PC-9 (cell line): ENCODE measurements at regions of chr10 and their contacts with region 1.

Region 1: GRCh38 chr10:7457478-7458316 is 46.9 kb upstream of the SFMBT2 start:
- DNase-seq: no peak
- H3K4me3 ChIP-seq: no peak overlapping the region
- H3K27ac ChIP-seq: no peak overlapping the region
- H3K4me1 ChIP-seq: no peaks in the 10 kb centered on the region
- H3K27me3 ChIP-seq: peaks cover 20% of the 10 kb centered on the region
- CTCF ChIP-seq: no peak

Region 2: GRCh38 chr10:7410862-7411670 is 46.6 kb before region 1 on chr10 and contains the start of gene SFMBT2:
- CTCF ChIA-PET with region 1: interaction called, 15 read pairs
- POLR2A ChIA-PET with region 1: no interaction called
- intact Hi-C with region 1: no loop called
- DNase-seq: peak in 1 of 2 experiments; percentile 15
- H3K4me3 ChIP-seq: no peak within 1 kb of the TSS
- H3K27ac ChIP-seq: no peak within 1 kb of the TSS
- H3K4me1 ChIP-seq: no peaks in the 10 kb centered on the region
- H3K27me3 ChIP-seq: no peaks in the 10 kb centered on the region
- CTCF ChIP-seq: no peak
- total RNA-seq, gene SFMBT2: 0.07 TPM in 1 of 2 replicates, not detected in the other

Region 3: DNA sequence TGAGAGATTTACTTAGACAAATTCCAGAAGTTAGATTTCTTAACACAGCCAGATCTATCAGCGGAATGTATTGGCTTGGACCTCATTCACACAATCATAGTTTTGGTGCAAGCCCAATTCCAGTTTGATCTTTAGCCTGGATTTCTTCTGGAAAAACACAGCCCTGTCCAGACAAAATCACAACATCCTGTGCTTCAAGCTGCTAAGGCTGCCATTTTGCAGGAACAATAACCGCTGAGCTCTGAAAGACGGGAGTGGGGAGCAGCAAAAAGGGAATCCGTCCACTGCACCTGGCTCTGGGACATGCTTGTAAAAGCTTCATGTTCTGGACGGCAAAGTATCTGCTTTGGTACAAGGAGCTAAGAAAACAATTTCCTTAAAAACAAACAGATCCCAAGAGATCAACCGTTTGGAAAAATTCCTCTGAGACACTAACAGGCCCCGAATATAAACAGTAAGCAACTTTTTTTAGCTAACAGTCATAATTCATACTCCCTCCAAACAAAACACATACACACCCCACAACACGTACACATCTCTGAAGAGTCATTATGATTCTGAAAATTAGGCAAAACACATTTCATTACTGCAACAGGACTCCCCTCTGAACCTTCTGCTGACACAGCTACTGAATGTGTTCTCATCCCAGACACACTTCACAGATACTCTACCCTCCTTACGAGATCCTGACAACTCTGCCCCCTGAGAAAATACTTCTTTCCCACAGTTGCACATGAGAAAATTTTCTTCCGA is 176.6 kb after region 1 on chr10:
- CTCF ChIA-PET with region 1: interaction called, 19 read pairs
- POLR2A ChIA-PET with region 1: no interaction called
- intact Hi-C with region 1: no loop called
- DNase-seq: no peak
- H3K4me3 ChIP-seq: no peak overlapping the region
- H3K27ac ChIP-seq: no peak overlapping the region
- H3K4me1 ChIP-seq: no peaks in the 10 kb centered on the region
- H3K27me3 ChIP-seq: peaks cover 40% of the 10 kb centered on the region
- CTCF ChIP-seq: no peak